Panc1 (cell line): ENCODE measurements at regions of chr6 and their contacts with region 1.

Region 1: DNA sequence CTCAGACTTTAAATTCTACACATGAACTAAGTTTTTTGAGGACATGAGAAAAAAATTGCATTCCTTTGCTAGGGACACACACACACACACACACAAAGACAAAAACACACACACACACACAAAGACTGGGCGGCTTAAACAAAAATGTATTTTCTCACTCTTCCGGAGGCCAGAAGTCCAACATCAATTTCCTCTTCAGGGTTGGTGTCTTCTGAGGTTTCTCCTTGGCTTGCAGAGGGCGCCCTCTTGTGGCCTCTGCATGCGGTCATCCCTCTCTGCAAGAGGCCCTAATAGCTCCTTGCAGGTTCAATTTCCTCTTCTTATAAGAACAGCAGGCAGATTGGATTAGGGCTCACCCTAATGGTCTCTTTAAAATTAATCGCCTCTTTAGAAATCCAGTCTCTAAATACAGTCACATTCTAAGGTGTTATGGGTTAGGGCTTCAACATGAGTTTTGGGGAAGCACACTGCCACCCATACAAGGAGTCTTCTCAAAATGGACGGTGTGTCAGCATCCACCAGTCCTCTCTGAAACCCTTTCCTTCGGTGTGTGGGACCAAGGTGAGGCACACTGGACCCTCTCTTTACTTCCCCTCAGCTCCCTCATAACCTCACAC is 61.4 kb downstream of the GPR6 start:
- DNase-seq: peak; percentile 87
- ATAC-seq: peak; percentile 95
- H3K4me3 ChIP-seq: peak overlapping the region; percentile 31 to 71
- H3K27ac ChIP-seq: 0 out of 2 replicates have a peak overlapping the region, but pooled peaks have one; percentile 1
- H3K4me1 ChIP-seq: no peaks in the 10 kb centered on the region
- H3K27me3 ChIP-seq: no peaks in the 10 kb centered on the region
- CTCF ChIP-seq: peak; percentile 99

Region 2: GRCh38 chr6:109705258-109705657 is 334.2 kb before region 1 on chr6:
- CTCF ChIA-PET with region 1: interaction called, 61 read pairs
- POLR2A ChIA-PET with region 1: no interaction called
- in situ Hi-C with region 1: no loop called
- intact Hi-C with region 1: loop called (anchors 1 kb)
- DNase-seq: peak; percentile 90
- ATAC-seq: peak; percentile 97
- H3K4me3 ChIP-seq: no peak overlapping the region
- H3K27ac ChIP-seq: no peak overlapping the region
- H3K4me1 ChIP-seq: no peaks in the 10 kb centered on the region
- H3K27me3 ChIP-seq: no peaks in the 10 kb centered on the region
- CTCF ChIP-seq: peak; percentile 100

Region 3: DNA sequence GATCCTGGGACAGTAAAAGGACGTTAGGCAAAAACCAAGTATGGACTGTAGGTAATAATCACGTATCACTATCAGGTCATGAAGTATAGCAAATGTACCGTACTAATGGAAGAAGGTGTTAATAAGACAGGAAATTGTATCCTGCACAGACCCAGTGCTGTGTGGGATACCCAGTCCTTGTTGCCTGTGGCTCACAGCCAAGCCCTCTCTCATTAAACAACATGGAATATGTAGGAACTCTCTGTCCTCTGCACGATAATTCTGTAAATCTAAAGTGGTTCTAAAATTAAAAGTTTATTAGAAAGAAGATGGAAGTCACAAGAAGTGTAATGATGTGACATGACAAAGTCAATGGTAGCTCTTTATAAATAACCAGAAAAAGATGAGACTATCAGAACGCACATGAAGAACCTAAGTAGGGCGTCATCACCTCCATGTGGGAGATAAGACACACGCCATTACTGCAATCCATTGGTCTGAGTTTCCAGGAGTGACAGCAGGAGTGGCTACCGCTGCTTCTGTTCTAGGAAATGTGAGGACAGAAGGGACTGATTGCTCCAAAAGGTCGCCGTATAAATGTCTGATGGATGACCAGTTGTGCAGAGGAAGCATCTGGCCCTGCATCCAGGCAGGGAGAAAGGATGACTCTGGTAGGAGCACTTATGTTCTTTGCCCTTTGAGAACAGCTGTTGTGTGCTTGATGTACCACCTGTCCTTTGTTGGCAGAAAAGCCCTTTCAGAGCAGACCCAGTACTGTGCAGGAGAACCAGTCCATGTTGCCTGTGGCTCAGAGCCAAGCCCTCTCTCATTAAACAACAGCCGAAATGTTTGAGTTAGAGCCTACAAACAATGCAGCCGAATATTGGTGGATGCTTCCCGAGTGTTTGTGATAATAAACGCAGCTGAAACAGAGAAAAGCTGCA is 222.8 kb before region 1 on chr6:
- CTCF ChIA-PET with region 1: no interaction called
- POLR2A ChIA-PET with region 1: interaction called, 11 read pairs
- in situ Hi-C with region 1: no loop called
- intact Hi-C with region 1: no loop called
- DNase-seq: no peak
- ATAC-seq: no peak; the same call in 1 of the 2 replicates
- H3K4me3 ChIP-seq: no peak overlapping the region
- H3K27ac ChIP-seq: no peak overlapping the region
- H3K4me1 ChIP-seq: no peaks in the 10 kb centered on the region
- H3K27me3 ChIP-seq: no peaks in the 10 kb centered on the region
- CTCF ChIP-seq: no peak

Region 4: DNA sequence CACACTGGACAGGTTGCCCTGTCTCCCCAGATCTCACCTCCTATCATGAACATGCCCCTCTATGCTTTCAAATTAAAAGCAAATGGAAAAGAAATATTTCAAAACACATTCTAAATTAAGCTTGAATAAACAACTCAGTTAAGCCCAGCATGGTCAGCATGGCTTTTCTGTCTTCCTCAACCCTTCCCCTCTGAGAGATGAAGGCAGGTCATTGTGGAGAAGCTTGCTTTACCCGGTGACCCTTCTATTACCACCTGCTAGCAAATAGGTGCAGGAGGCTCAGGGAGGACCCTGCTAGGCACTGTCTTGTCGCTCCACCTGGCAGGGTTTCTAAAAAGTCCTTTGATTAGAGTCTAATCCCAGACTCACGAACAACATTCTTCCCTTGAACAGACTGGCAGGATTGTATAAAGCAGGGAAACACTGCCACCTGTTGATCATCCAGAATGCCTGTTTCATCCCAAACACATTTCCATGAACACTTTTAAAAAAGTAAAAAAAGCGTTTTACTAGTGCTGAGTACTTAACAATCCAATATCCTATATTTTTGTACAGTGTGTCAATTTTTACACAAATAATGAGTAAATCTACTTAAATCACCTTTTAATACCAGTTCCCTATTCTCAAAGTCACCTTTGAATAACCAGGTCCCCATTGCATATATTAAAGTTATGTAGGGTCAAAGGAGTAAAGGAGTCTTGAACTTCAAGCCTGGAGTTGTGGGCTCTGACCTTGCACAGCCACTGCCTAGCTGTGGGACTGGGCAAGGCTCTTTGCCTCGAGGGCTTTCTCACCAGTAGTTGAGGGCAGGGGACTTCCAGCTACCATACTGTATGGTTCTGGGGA is 14.1 kb after region 1 on chr6:
- CTCF ChIA-PET with region 1: interaction called, 12 read pairs
- POLR2A ChIA-PET with region 1: no interaction called
- in situ Hi-C with region 1: no loop called
- intact Hi-C with region 1: no loop called
- DNase-seq: peak; percentile 28
- ATAC-seq: peak; percentile 80
- H3K4me3 ChIP-seq: no peak overlapping the region
- H3K27ac ChIP-seq: no peak overlapping the region
- H3K4me1 ChIP-seq: no peaks in the 10 kb centered on the region
- H3K27me3 ChIP-seq: peaks cover 65% of the 10 kb centered on the region
- CTCF ChIP-seq: peak; percentile 90

Region 5: GRCh38 chr6:110093981-110094380 is 54.5 kb after region 1 on chr6:
- CTCF ChIA-PET with region 1: no interaction called
- POLR2A ChIA-PET with region 1: no interaction called
- in situ Hi-C with region 1: no loop called
- intact Hi-C with region 1: no loop called
- DNase-seq: no peak
- ATAC-seq: no peak
- H3K4me3 ChIP-seq: no peak overlapping the region
- H3K27ac ChIP-seq: no peak overlapping the region
- H3K4me1 ChIP-seq: no peaks in the 10 kb centered on the region
- H3K27me3 ChIP-seq: no peaks in the 10 kb centered on the region
- CTCF ChIP-seq: no peak